MCF 10A (cell line): ENCODE measurements at regions of chr20 and their contacts with region 1.

Region 1: GRCh38 chr20:36808317-36809257 is 35.0 kb upstream of the DSN1 start:
- DNase-seq: peak; percentile 77
- H3K4me3 Mint-ChIP-seq: no peak overlapping the region
- H3K27ac Mint-ChIP-seq: peak overlapping the region; percentile 89
- H3K4me1 Mint-ChIP-seq: peaks cover 11% of the 10 kb centered on the region
- H3K27me3 Mint-ChIP-seq: no peaks in the 10 kb centered on the region
- CTCF ChIP-seq: peak; percentile 93

Region 2: DNA sequence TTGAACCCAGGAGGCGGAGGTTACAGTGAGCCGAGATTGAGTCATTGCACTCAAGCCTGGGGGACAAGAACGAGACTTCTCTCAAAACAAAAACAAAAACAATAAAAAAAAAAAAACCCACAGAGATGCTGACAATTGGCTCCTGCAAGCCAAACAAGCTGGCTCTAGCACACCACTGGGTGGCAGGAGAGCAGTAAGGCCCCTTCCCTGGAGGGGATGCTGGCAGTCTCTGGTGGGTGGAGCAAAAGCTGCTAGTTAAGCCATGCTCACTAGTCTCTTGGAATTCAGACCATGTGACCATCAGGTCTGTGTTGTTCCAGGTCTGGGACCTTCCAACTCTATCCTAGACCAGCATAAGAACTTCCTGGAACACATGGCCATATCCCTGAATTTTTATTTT is 16.2 kb before region 1 on chr20:
- CTCF ChIA-PET with region 1: interaction called, 19 read pairs
- POLR2A ChIA-PET with region 1: no interaction called
- intact Hi-C with region 1: no loop called
- DNase-seq: peak; percentile 36
- H3K4me3 Mint-ChIP-seq: no peak overlapping the region
- H3K27ac Mint-ChIP-seq: no peak overlapping the region
- H3K4me1 Mint-ChIP-seq: no peaks in the 10 kb centered on the region
- H3K27me3 Mint-ChIP-seq: no peaks in the 10 kb centered on the region
- CTCF ChIP-seq: peak; percentile 20

Region 3: GRCh38 chr20:36821964-36822437 is 13.4 kb after region 1 on chr20:
- CTCF ChIA-PET with region 1: interaction called, 15 read pairs
- POLR2A ChIA-PET with region 1: no interaction called
- intact Hi-C with region 1: no loop called
- DNase-seq: no peak
- H3K4me3 Mint-ChIP-seq: no peak overlapping the region
- H3K27ac Mint-ChIP-seq: no peak overlapping the region
- H3K4me1 Mint-ChIP-seq: peaks cover 5% of the 10 kb centered on the region
- H3K27me3 Mint-ChIP-seq: no peaks in the 10 kb centered on the region
- CTCF ChIP-seq: no peak

Region 4: GRCh38 chr20:36847009-36847709 is 38.6 kb after region 1 on chr20:
- CTCF ChIA-PET with region 1: interaction called, 5 read pairs
- POLR2A ChIA-PET with region 1: interaction called, 11 read pairs
- intact Hi-C with region 1: no loop called
- DNase-seq: peak; percentile 86
- H3K4me3 Mint-ChIP-seq: peak overlapping the region; percentile 55
- H3K27ac Mint-ChIP-seq: peak overlapping the region; percentile 91
- H3K4me1 Mint-ChIP-seq: peaks cover 8% of the 10 kb centered on the region
- H3K27me3 Mint-ChIP-seq: no peaks in the 10 kb centered on the region
- CTCF ChIP-seq: no peak

Region 5: DNA sequence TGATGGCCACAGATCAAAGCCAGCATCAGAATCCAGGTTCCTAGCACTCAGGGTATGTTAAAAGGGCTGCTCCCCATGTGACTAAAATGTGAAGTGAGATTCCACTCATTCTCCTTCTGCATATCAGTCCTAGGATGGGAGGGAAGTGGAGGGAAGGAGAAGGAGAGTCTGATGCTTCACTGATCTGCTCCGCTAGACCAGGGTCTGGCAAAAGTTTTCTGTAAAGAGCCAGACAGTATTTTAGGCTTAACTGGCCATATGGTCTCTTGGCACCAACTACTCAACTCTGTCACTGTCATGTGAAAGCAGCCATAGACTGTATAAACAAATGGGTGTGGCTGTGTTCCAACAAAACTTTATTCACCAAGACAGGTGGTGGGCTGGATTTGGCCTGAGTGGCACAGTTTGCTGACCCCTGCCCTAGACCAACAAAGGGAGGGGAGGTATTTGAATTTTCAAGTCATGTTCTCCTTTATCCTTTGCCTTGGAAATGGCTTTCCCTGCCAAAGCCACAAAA is 430.4 kb after region 1 on chr20:
- CTCF ChIA-PET with region 1: no interaction called
- POLR2A ChIA-PET with region 1: no interaction called
- intact Hi-C with region 1: no loop called
- DNase-seq: no peak
- H3K4me3 Mint-ChIP-seq: no peak overlapping the region
- H3K27ac Mint-ChIP-seq: no peak overlapping the region
- H3K4me1 Mint-ChIP-seq: no peaks in the 10 kb centered on the region
- H3K27me3 Mint-ChIP-seq: no peaks in the 10 kb centered on the region
- CTCF ChIP-seq: no peak